Activated naive CD4-positive, alpha-beta T cell treated with anti-CD3 and anti-CD28 coated beads for 36 hours (primary cell): ENCODE measurements at regions of chr19 and their contacts with region 1.

Region 1: GRCh38 chr19:52227196-52227940 is 37.5 kb downstream of the PPP2R1A start:
- DNase-seq: no peak
- H3K4me3 Mint-ChIP-seq: no peak overlapping the region
- H3K27ac Mint-ChIP-seq: peak overlapping the region; percentile 85
- H3K4me1 Mint-ChIP-seq: peaks cover 32% of the 10 kb centered on the region
- H3K27me3 Mint-ChIP-seq: no peaks in the 10 kb centered on the region

Region 2: GRCh38 chr19:52095172-52096014 is 132.0 kb before region 1 on chr19 and contains the start of gene ZNF841:
- CTCF ChIA-PET with region 1: no interaction called
- intact Hi-C with region 1: loop called (anchors 5 kb)
- DNase-seq: peak; percentile 94
- H3K4me3 Mint-ChIP-seq: peak within 1 kb of the TSS; percentile 91
- H3K27ac Mint-ChIP-seq: peak within 1 kb of the TSS; percentile 93
- H3K4me1 Mint-ChIP-seq: peaks cover 19% of the 10 kb centered on the region
- H3K27me3 Mint-ChIP-seq: no peaks in the 10 kb centered on the region
- total RNA-seq, gene ZNF841: 13.3 to 15.5 TPM